ENCODE measurements at regions of chr2 and their contacts with region 1.

Region 1: GRCh38 chr2:69717861-69718273 is 24.1 kb upstream of the ANXA4 start:
- DNase-seq: no peak
- H3K4me3 ChIP-seq: no peak overlapping the region
- H3K4me3 Mint-ChIP-seq: no peak overlapping the region
- H3K27ac ChIP-seq: no peak overlapping the region
- H3K27ac Mint-ChIP-seq: no peak overlapping the region
- H3K4me1 ChIP-seq: peaks cover 9% of the 10 kb centered on the region
- H3K4me1 Mint-ChIP-seq: peaks cover 8 to 12% (median 10%) of the 10 kb centered on the region in 4 donors
- H3K27me3 ChIP-seq: no peaks in the 10 kb centered on the region
- H3K27me3 Mint-ChIP-seq: no peaks in the 10 kb centered on the region

Region 2: GRCh38 chr2:69375494-69376353 is 342.1 kb before region 1 on chr2:
- CTCF ChIA-PET with region 1: no interaction called
- POLR2A ChIA-PET with region 1: no interaction called
- intact Hi-C with region 1: loop called (anchors 1 kb)
- DNase-seq: peak in 4 of 5 donors; percentile 19 to 38 (median 34)
- H3K4me3 ChIP-seq: no peak overlapping the region
- H3K4me3 Mint-ChIP-seq: peak overlapping the region in 2 of 8 donors; percentile 13 to 36
- H3K27ac ChIP-seq: no peak overlapping the region
- H3K27ac Mint-ChIP-seq: peak overlapping the region in 3 of 7 donors; percentile 0 to 36 (median 17)
- H3K4me1 ChIP-seq: no peaks in the 10 kb centered on the region
- H3K4me1 Mint-ChIP-seq: peaks cover 21 to 24% (median 22%) of the 10 kb centered on the region in 4 donors
- H3K27me3 ChIP-seq: no peaks in the 10 kb centered on the region
- H3K27me3 Mint-ChIP-seq: no peaks in the 10 kb centered on the region

Region 3: GRCh38 chr2:69483696-69484095 is 234.2 kb before region 1 on chr2:
- CTCF ChIA-PET with region 1: no interaction called
- POLR2A ChIA-PET with region 1: no interaction called
- intact Hi-C with region 1: no loop called
- DNase-seq: no peak
- H3K4me3 ChIP-seq: no peak overlapping the region
- H3K4me3 Mint-ChIP-seq: no peak overlapping the region
- H3K27ac ChIP-seq: no peak overlapping the region
- H3K27ac Mint-ChIP-seq: peak overlapping the region in 5 of 7 donors; percentile 28 to 68 (median 57)
- H3K4me1 ChIP-seq: peaks cover 5% of the 10 kb centered on the region
- H3K4me1 Mint-ChIP-seq: peaks cover 20 to 33% (median 23%) of the 10 kb centered on the region in 4 donors
- H3K27me3 ChIP-seq: no peaks in the 10 kb centered on the region
- H3K27me3 Mint-ChIP-seq: no peaks in the 10 kb centered on the region

Region 4: GRCh38 chr2:69559442-69560146 is 158.3 kb before region 1 on chr2:
- CTCF ChIA-PET with region 1: interaction called, 138 read pairs
- POLR2A ChIA-PET with region 1: interaction called, 3 read pairs
- intact Hi-C with region 1: loop called (anchors 1 kb)
- DNase-seq: peak in 3 of 5 donors; percentile 24 to 26 (median 24)
- H3K4me3 ChIP-seq: no peak overlapping the region
- H3K4me3 Mint-ChIP-seq: peak overlapping the region in 5 of 8 donors; percentile 5 to 50 (median 32)
- H3K27ac ChIP-seq: no peak overlapping the region
- H3K27ac Mint-ChIP-seq: peak overlapping the region in 5 of 7 donors; percentile 30 to 73 (median 68)
- H3K4me1 ChIP-seq: peaks cover 96% of the 10 kb centered on the region
- H3K4me1 Mint-ChIP-seq: peaks cover 56 to 94% (median 77%) of the 10 kb centered on the region in 4 donors
- H3K27me3 ChIP-seq: no peaks in the 10 kb centered on the region
- H3K27me3 Mint-ChIP-seq: no peaks in the 10 kb centered on the region

Region 5: GRCh38 chr2:69625078-69625795 is 92.6 kb before region 1 on chr2:
- CTCF ChIA-PET with region 1: interaction called, 6 read pairs
- POLR2A ChIA-PET with region 1: interaction called, 3 read pairs
- intact Hi-C with region 1: loop called (anchors 5 kb)
- DNase-seq: peak in 1 of 5 donors; percentile 14
- H3K4me3 ChIP-seq: no peak overlapping the region
- H3K4me3 Mint-ChIP-seq: no peak overlapping the region
- H3K27ac ChIP-seq: no peak overlapping the region
- H3K27ac Mint-ChIP-seq: no peak overlapping the region
- H3K4me1 ChIP-seq: peaks cover 90% of the 10 kb centered on the region
- H3K4me1 Mint-ChIP-seq: peaks cover 0 to 20% (median 14%) of the 10 kb centered on the region in 4 donors
- H3K27me3 ChIP-seq: no peaks in the 10 kb centered on the region
- H3K27me3 Mint-ChIP-seq: no peaks in the 10 kb centered on the region